HepG2 (cell line): ENCODE measurements at regions of chr12 and their contacts with region 1.

Region 1: DNA sequence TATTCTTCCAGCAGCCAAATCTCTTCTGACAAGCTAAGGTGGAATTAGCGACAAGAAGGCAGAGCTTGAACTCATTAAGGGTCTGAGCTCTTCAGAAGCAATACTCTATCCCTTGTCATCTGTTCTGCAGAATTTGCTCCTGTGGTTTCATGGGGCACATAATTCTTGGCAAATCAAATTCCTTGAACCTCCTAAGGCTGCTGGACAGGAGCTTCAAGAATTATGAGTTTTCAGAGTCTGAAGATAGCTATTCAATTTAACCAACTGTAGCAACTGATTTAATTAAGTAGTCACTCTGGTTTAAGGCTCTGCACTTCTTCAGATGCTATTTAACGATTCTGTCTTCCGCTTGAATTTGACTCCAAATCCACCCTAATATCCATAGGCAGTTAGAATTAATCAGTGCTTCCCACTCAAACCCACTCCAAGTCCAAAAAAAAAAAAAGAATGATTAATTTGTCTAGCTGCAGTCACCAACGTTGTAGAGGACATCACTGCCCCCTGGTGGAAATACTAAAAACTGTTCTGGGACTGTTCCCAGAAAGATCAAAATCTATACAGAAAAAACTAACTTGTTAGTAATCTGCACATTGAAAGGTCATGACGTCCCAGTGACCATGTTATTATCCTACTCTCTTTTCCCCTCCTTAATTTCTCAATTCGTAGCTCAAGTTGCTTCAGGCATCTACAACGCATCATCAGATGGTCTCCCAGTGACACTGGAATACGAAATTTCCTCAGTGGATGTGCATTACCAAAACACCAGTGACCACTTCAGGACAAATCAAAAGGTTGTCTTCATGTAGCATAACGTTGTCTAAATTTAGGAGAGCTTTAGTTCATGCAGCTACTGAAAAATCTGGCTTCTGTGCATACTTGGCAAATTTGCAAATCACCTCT is 169.8 kb downstream of the KIF21A start:
- DNase-seq: peak; percentile 24
- ATAC-seq: peak; percentile 46; the same call in 2 of the 3 replicates
- H3K4me3 ChIP-seq: no peak overlapping the region
- H3K27ac ChIP-seq: no peak overlapping the region
- H3K4me1 ChIP-seq: no peaks in the 10 kb centered on the region
- H3K27me3 ChIP-seq: no peaks in the 10 kb centered on the region; a peak in 1 of 5 replicates
- CTCF ChIP-seq: peak; percentile 50
- EP300 ChIP-seq: no peak
- POLR2A ChIP-seq: no peak
- RAD21 ChIP-seq: no peak

Region 2: GRCh38 chr12:38324896-38325295 is 948.2 kb before region 1 on chr12:
- CTCF ChIA-PET with region 1: interaction called, 4 read pairs
- POLR2A ChIA-PET with region 1: no interaction called
- in situ Hi-C with region 1: loop called (anchors 25 kb)
- intact Hi-C with region 1: loop called (anchors 1 kb)
- DNase-seq: no peak
- ATAC-seq: no peak
- H3K4me3 ChIP-seq: no peak overlapping the region
- H3K27ac ChIP-seq: no peak overlapping the region
- H3K4me1 ChIP-seq: no peaks in the 10 kb centered on the region
- H3K27me3 ChIP-seq: no peaks in the 10 kb centered on the region
- CTCF ChIP-seq: no peak
- EP300 ChIP-seq: no peak
- POLR2A ChIP-seq: no peak
- RAD21 ChIP-seq: no peak

Region 3: GRCh38 chr12:38332814-38333213 is 940.3 kb before region 1 on chr12:
- CTCF ChIA-PET with region 1: interaction called, 4 read pairs
- POLR2A ChIA-PET with region 1: no interaction called
- in situ Hi-C with region 1: loop called (anchors 25 kb)
- intact Hi-C with region 1: no loop called
- DNase-seq: no peak
- ATAC-seq: no peak
- H3K4me3 ChIP-seq: no peak overlapping the region
- H3K27ac ChIP-seq: no peak overlapping the region
- H3K4me1 ChIP-seq: no peaks in the 10 kb centered on the region
- H3K27me3 ChIP-seq: no peaks in the 10 kb centered on the region
- CTCF ChIP-seq: no peak
- EP300 ChIP-seq: no peak
- POLR2A ChIP-seq: no peak
- RAD21 ChIP-seq: no peak

Region 4: GRCh38 chr12:38921025-38921677 is 352.0 kb before region 1 on chr12:
- CTCF ChIA-PET with region 1: no interaction called
- POLR2A ChIA-PET with region 1: no interaction called
- in situ Hi-C with region 1: loop called (anchors 10 kb)
- intact Hi-C with region 1: loop called (anchors 1 kb)
- DNase-seq: peak; percentile 65
- ATAC-seq: peak; percentile 93
- H3K4me3 ChIP-seq: no peak overlapping the region
- H3K27ac ChIP-seq: no peak overlapping the region
- H3K4me1 ChIP-seq: no peaks in the 10 kb centered on the region
- H3K27me3 ChIP-seq: no peaks in the 10 kb centered on the region
- CTCF ChIP-seq: peak; percentile 69
- EP300 ChIP-seq: no peak
- POLR2A ChIP-seq: no peak
- RAD21 ChIP-seq: peak; percentile 54; the same call in 1 of the 2 replicates

Region 5: GRCh38 chr12:39205969-39206368 is 67.2 kb before region 1 on chr12:
- CTCF ChIA-PET with region 1: no interaction called
- POLR2A ChIA-PET with region 1: no interaction called
- in situ Hi-C with region 1: no loop called
- intact Hi-C with region 1: no loop called
- DNase-seq: no peak
- ATAC-seq: no peak
- H3K4me3 ChIP-seq: no peak overlapping the region
- H3K27ac ChIP-seq: no peak overlapping the region
- H3K4me1 ChIP-seq: no peaks in the 10 kb centered on the region
- H3K27me3 ChIP-seq: no peaks in the 10 kb centered on the region
- CTCF ChIP-seq: no peak
- EP300 ChIP-seq: no peak
- POLR2A ChIP-seq: no peak
- RAD21 ChIP-seq: no peak

Region 6: DNA sequence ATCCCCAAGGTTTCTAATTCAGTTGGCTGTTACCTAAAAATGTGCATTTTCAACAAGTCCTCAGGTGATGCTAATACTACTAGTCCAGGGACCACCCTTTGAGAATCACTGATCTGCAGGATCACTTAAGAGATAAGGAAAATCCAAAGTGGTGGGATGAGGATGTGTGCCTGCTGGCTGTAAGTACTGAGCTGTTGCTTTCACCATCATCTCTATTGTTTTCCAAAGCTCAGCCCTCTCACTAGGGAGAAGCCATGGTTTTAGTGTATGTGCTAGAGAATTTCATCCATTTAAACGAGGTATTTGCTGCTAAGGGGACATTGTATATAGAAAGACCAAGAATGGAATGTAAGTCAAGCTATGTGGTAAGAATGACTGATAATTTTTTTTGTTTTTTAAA is 32.5 kb before region 1 on chr12:
- CTCF ChIA-PET with region 1: no interaction called
- POLR2A ChIA-PET with region 1: no interaction called
- in situ Hi-C with region 1: no loop called
- intact Hi-C with region 1: no loop called
- DNase-seq: no peak
- ATAC-seq: no peak
- H3K4me3 ChIP-seq: no peak overlapping the region
- H3K27ac ChIP-seq: no peak overlapping the region
- H3K4me1 ChIP-seq: peaks cover 6% of the 10 kb centered on the region; the same call in 1 of the 2 replicates
- H3K27me3 ChIP-seq: no peaks in the 10 kb centered on the region
- CTCF ChIP-seq: no peak
- EP300 ChIP-seq: no peak
- POLR2A ChIP-seq: no peak
- RAD21 ChIP-seq: no peak